ENCODE measurements at regions of chr4 and their contacts with region 1.

Region 1: GRCh38 chr4:10106421-10107039 is 10.1 kb downstream of the WDR1 start:
- DNase-seq: peak; percentile 45
- H3K4me3 Mint-ChIP-seq: peak overlapping the region; percentile 61
- H3K27ac Mint-ChIP-seq: peak overlapping the region; percentile 81
- H3K4me1 Mint-ChIP-seq: peaks cover 99% of the 10 kb centered on the region
- H3K27me3 Mint-ChIP-seq: no peaks in the 10 kb centered on the region

Region 2: GRCh38 chr4:10096201-10096977 is 10.1 kb before region 1 on chr4:
- intact Hi-C with region 1: loop called (anchors 1 kb)
- DNase-seq: peak; percentile 72
- H3K4me3 Mint-ChIP-seq: peak overlapping the region; percentile 62
- H3K27ac Mint-ChIP-seq: peak overlapping the region; percentile 99
- H3K4me1 Mint-ChIP-seq: peaks cover 94% of the 10 kb centered on the region
- H3K27me3 Mint-ChIP-seq: no peaks in the 10 kb centered on the region

Region 3: DNA sequence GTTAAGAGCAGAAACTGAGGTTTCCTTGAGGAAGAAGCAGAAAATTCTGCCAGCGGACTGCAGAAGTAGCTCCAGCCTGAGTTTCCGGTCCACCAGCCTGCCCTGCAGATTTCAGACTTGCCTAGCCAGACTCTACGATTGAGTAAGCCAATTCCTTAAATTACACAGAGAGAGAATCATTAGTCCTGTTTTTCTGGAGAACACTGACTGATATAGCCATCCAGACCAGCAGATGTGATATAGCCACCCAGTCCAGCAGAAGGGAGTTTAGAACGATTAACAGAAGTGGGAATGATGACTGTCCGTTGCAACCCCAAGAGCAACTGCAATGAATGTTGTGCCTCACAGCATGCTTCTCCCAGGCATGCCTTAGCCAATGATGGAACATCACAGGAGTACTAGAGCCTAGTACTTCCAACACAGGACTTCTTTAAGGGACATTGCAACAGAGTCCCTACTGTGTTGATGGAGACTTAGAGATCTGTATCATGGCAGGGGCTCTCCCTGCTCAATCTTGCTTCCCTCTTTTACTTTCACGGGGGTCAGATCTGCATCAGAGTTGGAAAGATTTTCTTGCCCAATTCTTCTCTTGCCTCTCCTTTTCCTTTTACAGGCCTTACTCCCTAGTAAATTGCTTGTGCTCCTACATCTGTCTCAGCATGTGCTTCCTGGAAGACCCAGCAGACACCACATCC is 842.7 kb after region 1 on chr4:
- intact Hi-C with region 1: loop called (anchors 5 kb)
- DNase-seq: no peak
- H3K4me3 Mint-ChIP-seq: no peak overlapping the region
- H3K27ac Mint-ChIP-seq: no peak overlapping the region
- H3K4me1 Mint-ChIP-seq: peaks cover 12% of the 10 kb centered on the region
- H3K27me3 Mint-ChIP-seq: peaks cover 8% of the 10 kb centered on the region

Measured in activated T-helper 1 cell treated with anti-CD3 and anti-CD28 coated beads, Interleukin-12 subunit alpha, Interleukin-12 subunit beta, Interleukin-2, Interleukin-4 antibody, amounts not matched to agents 30 ng/mL and 10 ng/mL and 1 ng/mL, durations not matched to agents 14 hours and 24 hours and 36 hours (primary cell).